Tibial artery (tissue), 4 donors: ENCODE measurements at regions of chr1 and their contacts with region 1.

Region 1: DNA sequence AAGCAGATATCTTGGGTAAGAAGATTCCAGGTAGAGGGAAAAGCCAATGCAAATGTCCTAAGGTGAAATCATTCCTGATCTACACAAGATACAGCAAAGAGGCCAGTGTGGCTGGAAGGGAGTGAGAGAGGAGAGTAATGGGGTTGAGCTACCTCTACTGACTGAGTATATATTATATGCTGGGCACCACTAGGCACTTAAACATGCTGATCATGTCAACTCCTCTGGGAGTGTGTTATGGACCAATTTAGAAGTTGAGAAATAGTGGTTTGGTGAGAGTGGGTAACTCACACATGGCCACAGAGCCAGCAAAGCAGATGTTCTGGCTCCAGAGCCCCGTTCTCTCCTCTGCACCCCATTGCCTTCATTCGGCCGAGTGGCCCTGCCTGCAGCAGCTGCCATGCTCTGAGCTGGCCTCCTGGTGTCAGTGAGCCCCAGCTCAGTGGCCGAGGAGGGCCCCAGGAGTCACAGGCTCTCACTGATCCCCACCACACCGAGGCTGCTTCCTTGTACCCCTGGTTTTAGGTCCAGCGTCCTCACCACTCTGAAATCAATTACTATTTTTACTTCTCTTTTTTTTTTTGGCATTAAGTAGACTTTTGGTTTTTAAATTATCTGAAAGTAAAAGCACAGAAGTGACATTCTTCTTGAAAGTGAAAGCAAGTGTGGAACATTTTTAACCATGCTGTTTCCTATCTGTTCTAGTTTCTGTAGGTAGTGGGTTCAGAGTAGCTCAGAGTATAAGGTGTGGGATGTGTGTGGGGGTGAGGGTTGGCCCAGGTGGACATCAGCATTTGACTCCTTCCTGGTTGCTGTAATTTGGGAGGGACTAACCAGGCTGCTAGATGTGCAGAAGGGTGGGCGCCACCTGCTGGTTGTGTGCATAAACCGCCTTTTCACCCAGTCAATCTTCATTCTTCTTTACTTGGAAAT is 45.8 kb upstream of the CRNN start:
- DNase-seq: peak; percentile 56 to 75
- H3K4me3 ChIP-seq: peak overlapping the region; percentile 7 to 13
- H3K27ac ChIP-seq: peak overlapping the region in 1 of 2 donors; percentile 8
- H3K4me1 ChIP-seq: no peaks in the 10 kb centered on the region
- H3K27me3 ChIP-seq: peaks cover 0 to 5% of the 10 kb centered on the region in 2 donors
- CTCF ChIP-seq: peak; percentile 50 to 69

Region 2: DNA sequence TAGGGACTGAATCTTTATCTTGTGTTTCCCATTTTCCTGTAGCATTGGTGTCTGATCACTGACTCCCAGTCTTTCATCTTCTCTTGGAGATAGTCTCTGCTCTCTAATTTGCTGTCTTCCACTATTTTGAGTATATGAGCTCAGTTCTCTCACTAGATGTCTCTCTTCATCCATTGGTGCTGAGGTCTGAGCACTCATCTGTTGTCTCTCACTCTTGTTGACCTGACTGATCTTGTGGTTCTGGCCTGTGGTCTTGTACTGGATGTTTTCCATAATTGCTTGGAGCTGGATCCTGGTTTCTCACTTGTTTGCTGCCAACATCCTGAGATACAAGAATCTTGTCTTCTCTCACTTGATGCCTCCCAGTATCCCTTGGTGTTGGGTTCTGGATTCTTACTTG is 397.9 kb before region 1 on chr1:
- intact Hi-C with region 1: no loop called
- DNase-seq: no peak
- H3K4me3 ChIP-seq: no peak overlapping the region
- H3K27ac ChIP-seq: no peak overlapping the region
- H3K4me1 ChIP-seq: no peaks in the 10 kb centered on the region
- H3K27me3 ChIP-seq: peaks cover 0 to 12% of the 10 kb centered on the region in 2 donors
- CTCF ChIP-seq: no peak

Region 3: DNA sequence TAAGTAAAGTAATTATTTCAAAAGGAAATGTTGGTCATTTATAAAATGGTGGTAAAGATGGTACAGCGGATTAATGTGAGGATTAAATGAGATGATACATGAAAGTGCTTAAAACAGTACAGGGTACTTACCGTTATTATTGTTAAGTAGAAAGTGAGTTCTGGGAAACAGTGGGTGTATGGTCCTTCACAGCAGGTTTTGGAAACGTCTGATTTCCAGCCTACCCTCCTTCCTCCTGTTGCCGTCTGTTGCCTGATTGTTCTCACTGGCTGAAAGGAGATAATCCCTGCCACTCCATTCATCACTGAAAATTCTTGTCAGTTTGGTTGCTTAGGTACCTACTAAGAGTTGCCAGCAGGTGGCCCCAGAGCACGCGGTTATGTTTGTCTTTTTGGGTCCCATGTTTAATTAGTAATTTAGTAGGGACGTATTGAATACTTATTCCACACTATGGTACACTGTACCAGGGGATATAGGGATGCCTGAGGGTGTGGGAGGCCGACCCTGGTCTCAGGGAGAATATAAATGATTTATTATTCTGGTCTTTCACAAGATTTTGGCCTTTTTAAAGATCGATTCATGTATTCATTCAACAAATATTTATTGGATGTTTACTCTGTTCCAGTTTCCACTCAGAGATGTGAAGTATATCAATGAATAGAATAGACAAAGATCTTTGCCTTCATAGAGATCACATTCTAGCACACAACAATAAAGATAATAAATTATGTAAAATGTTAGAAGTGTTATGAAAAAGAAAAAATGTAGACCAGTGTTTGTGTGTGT is 270.0 kb before region 1 on chr1:
- intact Hi-C with region 1: loop called (anchors 5 kb)
- DNase-seq: peak in 1 of 2 donors; percentile 58
- H3K4me3 ChIP-seq: peak overlapping the region; percentile 48 to 66
- H3K27ac ChIP-seq: peak overlapping the region in 1 of 2 donors; percentile 56
- H3K4me1 ChIP-seq: peaks cover 0 to 11% (median 7%) of the 10 kb centered on the region in 4 donors
- H3K27me3 ChIP-seq: no peaks in the 10 kb centered on the region
- CTCF ChIP-seq: peak; percentile 55 to 64